ENCODE measurements at regions of chr7 and their contacts with region 1.

Region 1: DNA sequence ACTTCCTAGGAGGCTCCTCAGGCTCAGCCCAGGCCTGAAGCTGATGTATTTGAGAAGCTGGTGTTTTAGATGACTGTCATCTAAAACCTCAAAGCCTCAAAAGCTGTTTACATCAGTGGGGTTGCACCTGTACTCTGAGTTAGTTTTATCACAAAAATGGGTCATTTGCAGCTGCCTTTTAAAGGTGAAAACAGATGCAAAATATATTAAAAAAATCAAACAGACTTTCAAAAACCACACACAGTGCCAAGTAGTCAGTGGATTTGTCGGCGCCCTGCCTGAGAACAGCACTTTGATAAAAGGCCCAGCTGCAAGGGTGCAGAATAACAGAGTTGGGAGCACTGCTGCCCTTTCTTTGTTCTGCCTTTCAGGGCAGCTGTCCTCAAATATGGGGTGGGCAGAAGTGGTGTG is 103.0 kb downstream of the VOPP1 start:
- DNase-seq: peak in 3 of 5 donors; percentile 60 to 73 (median 63)
- H3K4me3 ChIP-seq: peak overlapping the region; percentile 15
- H3K4me3 Mint-ChIP-seq: peak overlapping the region; percentile 4 to 75 (median 48)
- H3K27ac ChIP-seq: no peak overlapping the region
- H3K27ac Mint-ChIP-seq: peak overlapping the region; percentile 52 to 96 (median 92)
- H3K4me1 ChIP-seq: peaks cover 74% of the 10 kb centered on the region
- H3K4me1 Mint-ChIP-seq: peaks cover 58 to 82% (median 70%) of the 10 kb centered on the region in 3 donors
- H3K27me3 ChIP-seq: no peaks in the 10 kb centered on the region
- H3K27me3 Mint-ChIP-seq: no peaks in the 10 kb centered on the region

Region 2: GRCh38 chr7:55432939-55433784 is 36.1 kb before region 1 on chr7:
- CTCF ChIA-PET with region 1: interaction called, 13 read pairs
- POLR2A ChIA-PET with region 1: no interaction called
- DNase-seq: peak in 2 of 5 donors; percentile 26 to 33
- H3K4me3 ChIP-seq: no peak overlapping the region
- H3K4me3 Mint-ChIP-seq: no peak overlapping the region
- H3K27ac ChIP-seq: no peak overlapping the region
- H3K27ac Mint-ChIP-seq: peak overlapping the region in 2 of 8 donors; percentile 19 to 72
- H3K4me1 ChIP-seq: peaks cover 8% of the 10 kb centered on the region
- H3K4me1 Mint-ChIP-seq: peaks cover 11 to 30% (median 21%) of the 10 kb centered on the region in 3 donors
- H3K27me3 ChIP-seq: no peaks in the 10 kb centered on the region
- H3K27me3 Mint-ChIP-seq: no peaks in the 10 kb centered on the region

Region 3: DNA sequence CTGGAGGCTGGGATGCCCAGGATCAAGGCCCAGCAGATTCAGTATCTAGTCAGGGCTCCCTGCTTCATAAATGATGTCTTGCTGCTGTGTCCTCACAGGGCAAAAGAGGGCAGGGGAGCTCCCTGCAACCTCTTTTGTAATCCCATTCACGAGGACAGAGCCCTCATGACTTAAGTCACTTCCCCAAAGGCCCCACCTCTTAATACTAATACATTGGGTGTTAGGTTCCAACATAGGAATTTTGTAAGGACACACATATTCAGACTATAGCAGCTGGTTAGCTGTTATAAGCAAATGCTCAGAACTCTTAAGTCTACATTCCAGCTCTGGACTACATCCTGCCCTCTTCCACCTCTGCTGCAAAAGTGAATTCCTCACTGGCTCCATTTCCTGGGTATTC is 40.0 kb after region 1 on chr7:
- CTCF ChIA-PET with region 1: no interaction called
- POLR2A ChIA-PET with region 1: no interaction called
- DNase-seq: no peak
- H3K4me3 ChIP-seq: no peak overlapping the region
- H3K4me3 Mint-ChIP-seq: no peak overlapping the region
- H3K27ac ChIP-seq: no peak overlapping the region
- H3K27ac Mint-ChIP-seq: peak overlapping the region in 2 of 8 donors; percentile 15 to 33
- H3K4me1 ChIP-seq: no peaks in the 10 kb centered on the region
- H3K4me1 Mint-ChIP-seq: peaks cover 32 to 78% (median 76%) of the 10 kb centered on the region in 3 donors
- H3K27me3 ChIP-seq: no peaks in the 10 kb centered on the region
- H3K27me3 Mint-ChIP-seq: no peaks in the 10 kb centered on the region

Measured in CD8-positive, alpha-beta memory T cell (primary cell).